ENCODE measurements at regions of chr7 and their contacts with region 1.

Region 1: GRCh38 chr7:122803323-122803722 is 82.9 kb downstream of the CADPS2 start:
- DNase-seq: no peak

Region 2: GRCh38 chr7:122674502-122674901 is 128.8 kb before region 1 on chr7:
- intact Hi-C with region 1: no loop called
- DNase-seq: no peak

Region 3: DNA sequence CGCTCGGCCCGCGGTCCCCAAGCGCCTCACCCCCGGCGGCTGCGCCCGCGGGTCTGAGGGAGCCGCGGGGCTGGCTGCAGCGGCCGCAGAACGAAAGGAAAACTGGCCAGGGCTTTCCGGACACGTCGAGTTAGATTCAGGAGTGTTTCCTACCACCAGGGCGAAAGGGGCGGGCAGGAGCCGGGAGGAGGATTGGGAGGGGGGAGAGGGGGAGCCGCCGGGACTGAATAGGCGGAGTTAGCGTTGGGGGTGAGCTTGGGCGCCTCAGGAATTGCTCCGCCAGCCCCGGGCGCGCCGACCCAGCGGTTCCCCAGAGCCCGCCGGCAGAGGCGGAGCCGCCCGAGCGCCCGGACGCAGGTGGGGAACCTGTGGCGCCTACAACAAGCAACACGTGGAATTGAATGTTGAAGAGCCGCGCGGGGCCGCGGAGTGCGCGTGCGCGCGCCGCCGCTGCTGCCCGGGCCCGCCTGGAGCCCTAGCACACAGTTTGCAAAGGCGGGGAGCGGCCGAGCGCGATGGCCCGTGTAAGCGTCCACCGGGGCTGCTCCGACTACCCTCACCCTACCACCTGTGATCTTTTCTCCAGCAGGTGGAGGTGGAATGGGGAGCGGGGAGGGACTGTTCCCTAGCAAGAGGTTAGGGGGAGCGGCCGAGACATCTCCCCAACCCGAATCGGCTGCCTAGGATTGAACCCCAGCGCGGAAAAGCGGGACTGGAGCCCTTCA is 83.2 kb after region 1 on chr7 and contains the start of gene CADPS2:
- intact Hi-C with region 1: loop called (anchors 2 kb)
- DNase-seq: peak; percentile 89
- total RNA-seq, gene CADPS2: 6.3 TPM

Region 4: GRCh38 chr7:123154231-123154860 is 351.0 kb after region 1 on chr7:
- intact Hi-C with region 1: loop called (anchors 10 kb)
- DNase-seq: peak; percentile 75

Measured in cardiac septum (tissue), 1 donor.